ENCODE measurements at regions of chr2 and their contacts with region 1.

Region 1: DNA sequence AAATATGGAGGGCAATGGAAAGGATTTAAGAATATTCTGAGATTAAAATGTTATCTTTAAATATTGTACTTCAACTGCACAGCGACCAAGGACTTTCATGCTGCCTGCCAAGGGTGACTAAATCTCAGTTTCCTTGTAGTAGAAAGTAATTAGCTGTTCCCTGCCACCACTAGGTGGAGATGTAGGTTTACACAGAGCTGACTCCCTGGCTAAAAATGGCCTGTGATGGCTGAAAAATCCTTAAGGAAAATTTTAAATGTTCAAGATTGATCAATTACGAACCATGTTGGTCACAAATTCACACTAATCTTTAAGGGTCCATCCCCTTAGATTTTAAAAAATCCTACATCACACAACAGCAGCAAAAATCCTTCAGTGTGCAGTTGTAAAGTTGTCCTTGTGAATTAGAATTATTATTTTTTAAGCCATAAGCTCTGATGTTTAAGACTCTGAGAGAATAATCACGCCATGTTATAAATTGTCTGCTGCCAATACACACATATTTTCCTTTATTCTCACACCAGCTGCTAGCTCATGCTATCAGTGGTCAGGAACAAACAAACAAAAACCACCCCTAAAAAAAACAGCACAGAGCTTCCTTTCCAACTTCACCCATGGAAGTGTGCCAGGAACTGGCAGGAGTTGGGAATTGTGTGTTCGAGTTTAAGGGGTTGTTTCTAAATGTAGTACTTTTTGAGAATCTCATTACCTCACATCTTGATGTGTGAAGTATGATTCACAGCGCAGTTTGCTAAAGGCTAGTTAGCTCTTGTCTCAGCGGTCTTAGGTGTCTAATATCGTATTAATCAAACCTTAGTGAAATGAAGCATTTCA is 399.8 kb downstream of the TMEM182 start:
- DNase-seq: peak; percentile 43

Region 2: GRCh38 chr2:102848366-102848839 is 313.3 kb before region 1 on chr2:
- in situ Hi-C with region 1: no loop called
- DNase-seq: peak; percentile 87

Region 3: GRCh38 chr2:102975996-102976975 is 185.4 kb before region 1 on chr2:
- in situ Hi-C with region 1: loop called (anchors 25 kb)
- DNase-seq: peak; percentile 57

Region 4: DNA sequence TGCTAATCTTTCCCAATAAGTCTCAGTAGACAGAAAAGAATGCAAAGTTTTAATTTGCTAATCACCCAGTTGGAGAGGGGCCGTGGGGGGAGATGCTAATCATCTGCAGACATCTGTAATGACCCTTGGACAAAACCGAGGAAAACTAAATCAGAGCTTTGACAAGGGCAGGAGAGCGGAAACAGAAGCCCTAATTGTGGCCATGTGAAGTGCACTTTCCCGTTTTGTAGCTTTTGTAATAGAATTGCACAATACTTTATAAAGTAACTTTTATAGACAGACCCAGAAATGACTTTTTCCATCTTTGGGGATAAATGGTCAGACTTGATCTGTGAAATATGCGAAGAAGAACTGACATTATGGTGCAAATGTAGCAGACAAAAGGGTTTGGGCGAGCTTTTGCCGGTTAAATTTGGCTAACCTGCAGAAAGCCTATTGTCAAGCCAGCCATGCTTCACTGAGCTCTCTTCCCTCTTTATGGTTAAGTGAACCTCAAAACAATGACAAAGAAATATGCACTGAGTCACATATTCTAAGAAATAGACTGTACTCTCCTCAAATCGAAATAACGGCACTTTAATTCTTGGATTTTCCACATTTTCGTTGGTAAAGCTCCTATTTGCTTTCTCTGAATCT is 712.2 kb after region 1 on chr2:
- in situ Hi-C with region 1: no loop called
- DNase-seq: no peak

Measured in KBM-7 (cell line).